Natural killer cell (primary cell): ENCODE measurements at regions of chr10 and their contacts with region 1.

Region 1: DNA sequence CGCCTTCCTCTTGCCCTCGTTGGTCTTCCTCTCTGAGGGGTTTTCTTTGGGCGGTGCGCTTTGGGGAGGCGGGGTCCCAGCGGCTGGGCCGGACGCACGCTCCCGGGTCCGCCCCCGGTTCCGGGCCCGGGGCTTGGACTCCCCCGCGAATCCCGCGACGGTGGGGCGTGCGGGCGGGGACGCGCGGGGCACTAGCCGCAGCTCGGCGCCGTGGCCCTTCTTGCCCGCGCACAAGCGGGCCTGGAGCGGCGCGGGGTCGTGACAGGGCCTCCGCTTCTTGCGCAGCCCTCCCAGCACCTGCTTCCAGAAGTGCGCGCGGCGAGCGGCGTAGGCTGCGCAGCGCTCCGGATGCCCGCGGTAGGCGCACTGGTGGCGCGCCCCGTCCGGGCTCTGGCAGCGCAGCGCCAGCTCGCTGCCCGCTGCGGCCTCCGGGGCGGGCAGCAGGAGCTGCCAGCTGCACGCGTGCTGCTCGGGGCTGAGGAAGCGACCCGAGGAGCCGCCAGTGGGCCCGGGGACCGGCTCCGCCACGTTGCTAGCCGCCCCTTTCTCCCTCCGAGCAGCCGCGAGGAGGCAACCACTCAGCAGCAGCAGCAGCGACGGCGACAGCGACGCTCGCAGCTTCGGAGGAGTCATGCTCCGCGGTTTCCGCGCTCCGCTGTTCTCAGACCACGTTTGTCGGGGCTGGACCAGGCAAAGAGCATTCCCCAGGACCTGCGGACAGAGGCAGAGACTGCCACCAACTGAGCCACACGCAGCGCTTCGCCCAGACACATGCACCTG is 759 bp downstream of the FGFBP3 start:
- DNase-seq: peak; percentile 68 to 86
- ATAC-seq: peak; percentile 81 to 91 (median 85)
- H3K4me3 ChIP-seq: peak overlapping the region; percentile 68
- H3K4me3 Mint-ChIP-seq: peak overlapping the region; percentile 95
- H3K27ac ChIP-seq: peak overlapping the region; percentile 77
- H3K27ac Mint-ChIP-seq: peak overlapping the region; percentile 85 to 88
- H3K4me1 ChIP-seq: peaks cover 16% of the 10 kb centered on the region
- H3K4me1 Mint-ChIP-seq: peaks cover 26% of the 10 kb centered on the region in 2 donors
- H3K27me3 ChIP-seq: no peaks in the 10 kb centered on the region
- H3K27me3 Mint-ChIP-seq: peaks cover 1 to 6% of the 10 kb centered on the region in 2 donors
- CTCF ChIP-seq: peak; percentile 46

Region 2: DNA sequence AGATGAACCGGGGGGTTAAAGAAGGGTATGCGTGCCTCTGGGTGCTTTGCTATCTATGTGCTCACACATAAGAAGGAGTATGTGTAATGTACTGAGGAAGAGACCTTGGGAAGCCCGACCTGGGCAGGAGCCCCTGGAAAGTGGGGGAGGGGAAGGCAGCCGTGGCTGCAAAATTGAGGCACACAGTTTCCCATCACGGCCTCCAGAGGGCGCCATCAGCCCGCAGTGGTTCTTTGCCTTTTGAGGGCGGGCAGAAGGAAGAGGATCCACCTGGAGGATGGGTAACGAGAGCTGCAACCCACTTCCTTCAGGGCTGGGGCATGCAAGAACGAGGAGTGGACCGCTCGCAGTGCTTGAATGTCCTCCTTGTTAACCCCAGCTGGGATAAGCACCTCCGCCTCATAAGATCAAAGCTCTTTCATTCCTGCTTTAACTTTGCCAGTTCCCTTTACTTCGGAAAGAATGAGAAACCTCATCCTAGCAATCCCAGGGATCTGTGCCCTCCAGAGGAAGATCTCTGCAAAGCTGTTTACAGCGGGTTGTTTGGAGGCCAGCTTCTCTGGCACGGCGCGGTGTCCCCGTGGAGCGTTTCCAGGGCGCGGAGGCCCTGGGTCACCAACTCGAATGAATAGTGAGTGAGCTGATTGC is 610.2 kb before region 1 on chr10:
- intact Hi-C with region 1: loop called (anchors 2 kb)
- DNase-seq: peak; percentile 62 to 90
- ATAC-seq: peak; percentile 89 to 96 (median 95)
- H3K4me3 ChIP-seq: peak overlapping the region; percentile 6
- H3K4me3 Mint-ChIP-seq: peak overlapping the region; percentile 81
- H3K27ac ChIP-seq: no peak overlapping the region
- H3K27ac Mint-ChIP-seq: no peak overlapping the region
- H3K4me1 ChIP-seq: peaks cover 8% of the 10 kb centered on the region
- H3K4me1 Mint-ChIP-seq: peaks cover 11% of the 10 kb centered on the region in 2 donors
- H3K27me3 ChIP-seq: no peaks in the 10 kb centered on the region
- H3K27me3 Mint-ChIP-seq: peaks cover 10% of the 10 kb centered on the region in 2 donors
- CTCF ChIP-seq: peak; percentile 81

Region 3: GRCh38 chr10:91389636-91390512 is 518.7 kb before region 1 on chr10:
- intact Hi-C with region 1: loop called (anchors 2 kb)
- DNase-seq: peak in 1 of 2 donors; percentile 87
- ATAC-seq: peak; percentile 87 to 100 (median 97)
- H3K4me3 ChIP-seq: no peak overlapping the region
- H3K4me3 Mint-ChIP-seq: no peak overlapping the region
- H3K27ac ChIP-seq: no peak overlapping the region
- H3K27ac Mint-ChIP-seq: no peak overlapping the region
- H3K4me1 ChIP-seq: no peaks in the 10 kb centered on the region
- H3K4me1 Mint-ChIP-seq: no peaks in the 10 kb centered on the region
- H3K27me3 ChIP-seq: peaks cover 3% of the 10 kb centered on the region
- H3K27me3 Mint-ChIP-seq: peaks cover 23 to 30% of the 10 kb centered on the region in 2 donors
- CTCF ChIP-seq: peak; percentile 84

Region 4: GRCh38 chr10:91613411-91614253 is 294.9 kb before region 1 on chr10:
- intact Hi-C with region 1: no loop called
- DNase-seq: no peak
- ATAC-seq: no peak
- H3K4me3 ChIP-seq: no peak overlapping the region
- H3K4me3 Mint-ChIP-seq: no peak overlapping the region
- H3K27ac ChIP-seq: no peak overlapping the region
- H3K27ac Mint-ChIP-seq: no peak overlapping the region
- H3K4me1 ChIP-seq: no peaks in the 10 kb centered on the region
- H3K4me1 Mint-ChIP-seq: no peaks in the 10 kb centered on the region
- H3K27me3 ChIP-seq: no peaks in the 10 kb centered on the region
- H3K27me3 Mint-ChIP-seq: peaks cover 8% of the 10 kb centered on the region in 2 donors
- CTCF ChIP-seq: no peak

Region 5: GRCh38 chr10:91758303-91759146 is 150.0 kb before region 1 on chr10:
- intact Hi-C with region 1: loop called (anchors 1 kb)
- DNase-seq: peak in 1 of 2 donors; percentile 76
- ATAC-seq: peak; percentile 58 to 75 (median 75)
- H3K4me3 ChIP-seq: no peak overlapping the region
- H3K4me3 Mint-ChIP-seq: no peak overlapping the region
- H3K27ac ChIP-seq: no peak overlapping the region
- H3K27ac Mint-ChIP-seq: no peak overlapping the region
- H3K4me1 ChIP-seq: no peaks in the 10 kb centered on the region
- H3K4me1 Mint-ChIP-seq: no peaks in the 10 kb centered on the region
- H3K27me3 ChIP-seq: no peaks in the 10 kb centered on the region
- H3K27me3 Mint-ChIP-seq: peaks cover 25 to 55% of the 10 kb centered on the region in 2 donors
- CTCF ChIP-seq: peak; percentile 61

Region 6: DNA sequence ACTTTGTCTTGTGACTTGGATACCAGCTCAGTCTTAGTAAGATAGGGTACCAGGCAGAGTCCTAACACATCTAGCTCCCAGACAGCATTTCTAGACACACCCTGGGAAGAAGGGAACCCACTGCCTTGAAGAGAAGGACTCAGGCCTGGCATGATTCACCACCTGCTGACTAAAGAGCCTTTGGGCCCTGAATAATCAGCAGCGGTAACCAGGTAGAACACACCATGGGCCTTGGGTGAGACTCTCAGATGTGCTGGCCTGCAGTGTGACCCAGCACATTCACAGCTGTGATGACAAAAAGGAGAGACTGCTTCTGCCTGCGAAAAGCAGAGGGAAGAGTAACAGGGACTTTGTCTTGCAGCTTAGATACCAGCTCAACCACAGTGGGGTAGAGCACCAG is 120.7 kb before region 1 on chr10:
- intact Hi-C with region 1: no loop called
- DNase-seq: no peak
- ATAC-seq: no peak
- H3K4me3 ChIP-seq: no peak overlapping the region
- H3K4me3 Mint-ChIP-seq: no peak overlapping the region
- H3K27ac ChIP-seq: no peak overlapping the region
- H3K27ac Mint-ChIP-seq: no peak overlapping the region
- H3K4me1 ChIP-seq: no peaks in the 10 kb centered on the region
- H3K4me1 Mint-ChIP-seq: no peaks in the 10 kb centered on the region
- H3K27me3 ChIP-seq: no peaks in the 10 kb centered on the region
- H3K27me3 Mint-ChIP-seq: peaks cover 20 to 42% of the 10 kb centered on the region in 2 donors
- CTCF ChIP-seq: no peak

Region 7: DNA sequence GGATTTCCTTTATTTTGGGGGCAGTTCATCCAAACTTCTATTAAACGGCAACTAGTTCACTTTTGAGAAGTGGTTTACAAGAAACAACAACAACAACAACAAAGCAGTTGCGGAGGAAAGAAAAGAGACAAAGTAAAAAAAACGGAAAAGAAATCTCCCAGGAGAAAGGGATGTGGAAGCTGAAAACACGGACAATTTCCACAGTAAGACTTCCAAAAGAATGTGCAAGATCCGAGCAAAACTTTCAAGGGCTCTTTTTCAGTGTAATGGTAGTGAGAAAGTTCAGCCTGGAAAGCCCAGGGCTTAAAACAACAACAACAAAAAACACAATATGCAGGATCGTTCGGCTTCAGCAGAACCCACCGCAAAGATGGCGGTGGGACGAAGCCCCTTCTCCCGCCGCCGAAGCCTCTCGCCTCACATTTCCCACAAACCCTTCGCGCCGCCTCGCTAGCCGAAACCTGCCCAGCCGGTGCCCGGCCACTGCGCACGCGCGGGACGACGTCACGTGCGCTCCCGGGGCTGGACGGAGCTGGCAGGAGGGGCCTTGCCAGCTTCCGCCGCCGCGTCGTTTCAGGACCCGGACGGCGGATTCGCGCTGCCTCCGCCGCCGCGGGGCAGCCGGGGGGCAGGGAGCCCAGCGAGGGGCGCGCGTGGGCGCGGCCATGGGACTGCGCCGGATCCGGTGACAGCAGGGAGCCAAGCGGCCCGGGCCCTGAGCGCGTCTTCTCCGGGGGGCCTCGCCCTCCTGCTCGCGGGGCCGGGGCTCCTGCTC is 110.5 kb before region 1 on chr10 and contains the start of gene TNKS2:
- intact Hi-C with region 1: loop called (anchors 2 kb)
- DNase-seq: peak; percentile 92 to 97
- ATAC-seq: peak; percentile 77 to 91 (median 88)
- H3K4me3 ChIP-seq: peak within 1 kb of the TSS; percentile 95
- H3K4me3 Mint-ChIP-seq: peak within 1 kb of the TSS; percentile 97
- H3K27ac ChIP-seq: peak within 1 kb of the TSS; percentile 93
- H3K27ac Mint-ChIP-seq: peak within 1 kb of the TSS; percentile 97
- H3K4me1 ChIP-seq: peaks cover 6% of the 10 kb centered on the region
- H3K4me1 Mint-ChIP-seq: peaks cover 68 to 72% of the 10 kb centered on the region in 2 donors
- H3K27me3 ChIP-seq: no peaks in the 10 kb centered on the region
- H3K27me3 Mint-ChIP-seq: no peaks in the 10 kb centered on the region
- CTCF ChIP-seq: no peak
- total RNA-seq, gene TNKS2: 47.0 to 50.9 (median 47.9) TPM

Region 8: DNA sequence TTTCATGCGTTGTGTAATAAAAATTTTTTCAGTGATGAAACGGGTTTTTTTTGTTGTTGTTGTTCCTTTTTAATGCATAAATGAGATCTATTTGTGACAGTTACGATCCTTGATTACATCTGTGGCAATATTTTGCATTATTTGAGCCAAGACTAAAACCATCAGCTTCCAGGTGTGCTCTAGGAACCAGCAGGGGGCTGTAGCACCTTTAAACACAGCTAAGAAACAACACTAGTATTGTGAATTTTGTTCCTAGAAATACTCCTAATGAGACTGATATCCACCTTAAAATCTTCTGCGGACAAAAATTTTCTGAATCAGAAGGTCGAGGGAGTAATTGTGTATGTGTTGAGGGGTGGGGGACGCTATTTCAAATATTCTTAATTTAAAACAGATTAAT is 51.9 kb before region 1 on chr10:
- intact Hi-C with region 1: loop called (anchors 2 kb)
- DNase-seq: peak in 1 of 2 donors; percentile 39
- ATAC-seq: no peak
- H3K4me3 ChIP-seq: no peak overlapping the region
- H3K4me3 Mint-ChIP-seq: no peak overlapping the region
- H3K27ac ChIP-seq: no peak overlapping the region
- H3K27ac Mint-ChIP-seq: peak overlapping the region in 1 of 2 donors; percentile 4
- H3K4me1 ChIP-seq: no peaks in the 10 kb centered on the region
- H3K4me1 Mint-ChIP-seq: no peaks in the 10 kb centered on the region
- H3K27me3 ChIP-seq: no peaks in the 10 kb centered on the region
- H3K27me3 Mint-ChIP-seq: no peaks in the 10 kb centered on the region
- CTCF ChIP-seq: no peak

Region 9: DNA sequence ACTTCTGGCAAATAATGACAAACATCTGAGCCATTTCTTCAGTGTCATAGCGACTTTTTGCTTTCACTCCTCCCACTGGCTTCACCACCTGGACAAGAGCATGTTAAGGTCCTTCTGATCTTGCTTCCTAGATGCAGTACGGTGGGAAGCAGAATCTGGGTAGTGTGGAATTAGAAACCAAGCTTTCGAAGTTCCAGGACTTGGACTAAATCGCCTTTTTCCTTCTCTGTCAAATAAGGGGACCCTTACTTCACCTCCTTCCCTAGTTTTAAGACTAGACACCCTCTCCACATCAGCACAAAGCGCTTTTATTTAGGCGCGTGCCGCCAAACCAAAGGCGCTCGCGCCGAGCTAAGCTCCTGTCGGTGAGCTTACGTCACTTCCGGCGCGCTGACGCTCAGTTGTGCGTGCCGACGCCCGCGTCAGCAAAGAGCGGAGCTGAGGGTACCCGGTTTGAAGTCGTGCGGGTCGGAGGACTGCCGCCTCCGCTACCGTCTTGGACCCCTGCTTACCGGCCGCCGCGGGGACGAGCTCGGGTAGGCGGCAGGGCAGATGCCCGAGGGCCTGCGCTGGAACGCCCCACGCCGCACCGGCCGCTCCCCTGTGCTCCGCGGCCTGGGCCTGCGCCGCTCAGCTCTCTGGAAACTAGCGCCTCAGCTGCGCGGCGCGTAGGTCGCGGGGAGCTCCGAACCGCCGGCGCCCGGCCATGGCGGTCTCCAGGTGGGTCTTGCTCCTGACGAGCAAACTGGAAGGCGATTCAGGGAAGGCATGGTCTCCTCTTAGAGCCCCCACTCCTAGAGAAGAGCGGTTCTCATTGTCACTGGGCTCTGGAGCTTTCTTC is 15.1 kb after region 1 on chr10 and contains the start of gene BTAF1:
- intact Hi-C with region 1: loop called (anchors 2 kb)
- DNase-seq: peak; percentile 90 to 98
- ATAC-seq: peak; percentile 92 to 96 (median 92)
- H3K4me3 ChIP-seq: peak within 1 kb of the TSS; percentile 57
- H3K4me3 Mint-ChIP-seq: peak within 1 kb of the TSS; percentile 94
- H3K27ac ChIP-seq: peak within 1 kb of the TSS; percentile 88
- H3K27ac Mint-ChIP-seq: peak within 1 kb of the TSS; percentile 95 to 97
- H3K4me1 ChIP-seq: peaks cover 9% of the 10 kb centered on the region
- H3K4me1 Mint-ChIP-seq: peaks cover 36 to 39% of the 10 kb centered on the region in 2 donors
- H3K27me3 ChIP-seq: peaks cover 6% of the 10 kb centered on the region
- H3K27me3 Mint-ChIP-seq: peaks cover 4 to 9% of the 10 kb centered on the region in 2 donors
- CTCF ChIP-seq: no peak
- total RNA-seq, gene BTAF1: 77.3 to 88.7 (median 80.7) TPM

Region 10: DNA sequence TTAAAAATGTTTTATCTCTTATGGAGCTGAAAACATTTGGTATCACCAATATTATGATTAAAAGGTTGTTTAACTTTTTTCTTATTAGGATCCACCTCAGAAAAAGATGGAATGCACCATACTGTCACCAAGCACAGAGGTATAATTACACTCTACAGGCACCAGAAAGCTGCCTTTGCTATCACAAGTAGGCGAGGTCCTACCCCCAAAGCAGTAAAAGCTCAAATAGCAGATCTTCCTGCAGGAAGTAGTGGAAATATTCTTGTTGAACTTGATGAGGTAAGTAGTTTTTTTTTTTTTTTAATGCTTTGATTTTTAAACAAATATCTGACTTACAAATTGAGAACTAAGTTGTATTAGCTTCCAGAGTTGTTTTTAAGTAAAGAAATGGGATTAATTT is 83.5 kb after region 1 on chr10:
- intact Hi-C with region 1: no loop called
- DNase-seq: no peak
- ATAC-seq: no peak
- H3K4me3 ChIP-seq: no peak overlapping the region
- H3K4me3 Mint-ChIP-seq: no peak overlapping the region
- H3K27ac ChIP-seq: no peak overlapping the region
- H3K27ac Mint-ChIP-seq: no peak overlapping the region
- H3K4me1 ChIP-seq: no peaks in the 10 kb centered on the region
- H3K4me1 Mint-ChIP-seq: peaks cover 0 to 6% of the 10 kb centered on the region in 2 donors
- H3K27me3 ChIP-seq: no peaks in the 10 kb centered on the region
- H3K27me3 Mint-ChIP-seq: no peaks in the 10 kb centered on the region
- CTCF ChIP-seq: no peak

Region 11: DNA sequence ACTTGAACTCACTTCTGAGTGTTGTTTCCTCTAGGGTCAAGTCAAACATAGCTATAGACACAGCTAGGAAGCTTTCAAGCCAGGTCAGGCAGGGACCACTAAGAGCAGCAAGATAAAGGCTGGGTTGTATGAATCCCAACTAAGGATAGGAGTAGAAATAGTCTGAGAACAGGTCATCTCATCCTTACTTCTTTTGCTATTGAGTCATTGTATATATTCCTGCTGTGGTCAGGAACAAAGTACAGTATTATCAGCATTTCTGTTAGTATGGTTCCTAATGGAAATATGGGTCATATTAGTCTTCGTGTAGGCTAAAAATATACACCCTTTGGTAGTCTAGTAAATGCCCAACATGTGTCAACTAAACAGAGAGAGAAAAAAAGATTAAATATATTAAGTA is 160.4 kb after region 1 on chr10:
- intact Hi-C with region 1: no loop called
- DNase-seq: no peak
- ATAC-seq: no peak
- H3K4me3 ChIP-seq: no peak overlapping the region
- H3K4me3 Mint-ChIP-seq: no peak overlapping the region
- H3K27ac ChIP-seq: no peak overlapping the region
- H3K27ac Mint-ChIP-seq: no peak overlapping the region
- H3K4me1 ChIP-seq: no peaks in the 10 kb centered on the region
- H3K4me1 Mint-ChIP-seq: no peaks in the 10 kb centered on the region
- H3K27me3 ChIP-seq: no peaks in the 10 kb centered on the region
- H3K27me3 Mint-ChIP-seq: no peaks in the 10 kb centered on the region
- CTCF ChIP-seq: no peak